Dendritic cell treated with granulocyte-macrophage colony-stimulating factor and Interleukin-4, amounts not matched to agents 40 ng/mL and 50 ng/mL, for 4 days (primary cell): ENCODE measurements at regions of chr9 and their contacts with region 1.

Region 1: DNA sequence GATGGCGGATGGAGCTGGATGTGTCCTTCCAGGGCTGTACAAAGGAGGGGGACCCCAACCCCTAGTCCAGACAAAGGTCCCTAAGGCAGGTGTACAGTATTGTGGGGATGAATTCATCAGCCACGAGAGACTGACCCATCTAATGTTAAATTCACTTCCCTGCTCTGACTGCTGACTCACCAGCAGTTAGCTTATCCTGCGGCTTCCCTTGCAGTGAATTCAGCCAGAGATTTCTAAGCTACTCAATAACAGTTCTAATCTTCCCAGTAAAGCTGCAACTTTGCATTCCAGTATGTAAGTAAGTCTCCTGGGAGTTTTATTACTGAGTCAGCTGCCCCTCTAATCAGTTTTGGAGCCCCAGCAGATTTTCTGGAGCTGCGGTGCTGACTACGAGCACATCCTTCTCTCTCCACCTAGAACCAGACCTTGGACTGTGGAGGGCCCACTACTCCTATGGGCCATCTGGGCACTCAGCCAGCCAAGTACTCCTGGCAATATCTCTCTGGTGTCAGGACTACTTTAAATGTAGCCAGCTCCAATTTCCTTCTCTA is 16.1 kb downstream of the B4GALT1 start:
- H3K4me3 Mint-ChIP-seq: no peak overlapping the region
- H3K27ac Mint-ChIP-seq: peak overlapping the region; percentile 79
- H3K4me1 Mint-ChIP-seq: peaks cover 80% of the 10 kb centered on the region
- H3K27me3 Mint-ChIP-seq: no peaks in the 10 kb centered on the region

Region 2: GRCh38 chr9:33116860-33117259 is 34.2 kb before region 1 on chr9:
- intact Hi-C with region 1: loop called (anchors 5 kb)
- H3K4me3 Mint-ChIP-seq: peak overlapping the region; percentile 37
- H3K27ac Mint-ChIP-seq: peak overlapping the region; percentile 91
- H3K4me1 Mint-ChIP-seq: peaks cover 32% of the 10 kb centered on the region
- H3K27me3 Mint-ChIP-seq: no peaks in the 10 kb centered on the region